Ovary (tissue), 10 donors: ENCODE measurements at regions of chr1 and their contacts with region 1.

Region 1: GRCh38 chr1:45629035-45629434 is 5.2 kb upstream of the CCDC17 start:
- DNase-seq: no peak
- H3K4me3 ChIP-seq: no peak overlapping the region
- H3K27ac ChIP-seq: no peak overlapping the region
- H3K4me1 ChIP-seq: no peaks in the 10 kb centered on the region
- H3K27me3 ChIP-seq: no peaks in the 10 kb centered on the region
- CTCF ChIP-seq: no peak
- EP300 ChIP-seq: no peak
- POLR2A ChIP-seq: no peak

Region 2: GRCh38 chr1:45647248-45648021 is 18.4 kb after region 1 on chr1:
- intact Hi-C with region 1: loop called in 1 of 4 experiments (anchors 1 kb)
- DNase-seq: no peak
- H3K4me3 ChIP-seq: no peak overlapping the region
- H3K27ac ChIP-seq: no peak overlapping the region
- H3K4me1 ChIP-seq: no peaks in the 10 kb centered on the region
- H3K27me3 ChIP-seq: no peaks in the 10 kb centered on the region
- CTCF ChIP-seq: no peak
- EP300 ChIP-seq: no peak
- POLR2A ChIP-seq: no peak